ENCODE measurements at regions of chr1 and their contacts with region 1.

Region 1: DNA sequence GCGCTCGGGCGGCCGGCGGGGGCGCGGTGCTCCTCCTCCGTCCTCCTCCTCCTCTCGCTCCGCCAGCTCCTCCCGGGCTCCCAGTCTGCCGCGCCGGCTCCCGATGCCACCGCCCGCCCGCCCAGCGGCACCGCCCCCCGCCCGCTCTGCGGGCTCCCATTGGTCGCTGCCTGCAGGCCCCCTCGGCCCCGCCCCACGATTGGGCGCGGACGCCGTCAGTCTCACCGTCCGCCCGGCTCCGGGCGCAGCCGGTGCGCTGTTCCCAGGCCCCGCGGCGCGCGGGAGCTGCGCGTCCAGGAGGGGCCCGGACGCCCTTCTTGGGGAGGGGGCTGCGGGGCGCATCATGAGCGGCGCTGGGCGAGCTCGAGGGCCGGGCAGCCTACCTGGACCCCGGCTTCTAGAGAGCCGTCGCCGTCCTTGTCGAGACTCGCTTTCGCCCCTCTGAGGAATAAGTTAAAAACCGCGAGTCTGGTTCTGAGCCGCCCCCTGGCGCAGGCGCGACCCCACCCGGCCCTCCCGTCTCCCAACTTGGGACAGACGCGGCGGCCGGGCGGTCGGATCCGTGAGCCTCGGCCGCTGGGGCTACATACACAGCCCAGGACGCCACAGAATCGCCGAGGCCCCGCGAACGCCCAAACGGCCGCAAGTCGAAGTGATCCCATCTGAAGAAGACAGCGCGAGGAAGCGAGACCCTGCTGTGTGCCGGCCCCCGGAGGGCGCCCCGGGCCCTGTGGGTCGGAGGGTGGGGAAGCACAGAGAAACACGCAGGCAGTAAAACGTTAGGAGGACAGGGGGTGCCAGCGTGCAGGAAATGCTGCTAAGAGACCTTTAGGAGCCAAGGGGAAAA is at the start of gene SIPA1L2:
- DNase-seq: peak; percentile 92 to 95 (median 94)
- ATAC-seq: peak; percentile 96
- H3K4me3 ChIP-seq: peak within 1 kb of the TSS; percentile 60 to 68
- H3K27ac ChIP-seq: peak within 1 kb of the TSS; percentile 53 to 85 (median 78)
- H3K4me1 ChIP-seq: peaks cover 18% of the 10 kb centered on the region
- H3K27me3 ChIP-seq: no peaks in the 10 kb centered on the region
- CTCF ChIP-seq: peak in 6 of 7 experiments; percentile 20 to 67 (median 63)
- POLR2A ChIP-seq: peak; percentile 50 to 65 (median 53)
- total RNA-seq, gene SIPA1L2: 5.6 to 8.6 TPM

Region 2: DNA sequence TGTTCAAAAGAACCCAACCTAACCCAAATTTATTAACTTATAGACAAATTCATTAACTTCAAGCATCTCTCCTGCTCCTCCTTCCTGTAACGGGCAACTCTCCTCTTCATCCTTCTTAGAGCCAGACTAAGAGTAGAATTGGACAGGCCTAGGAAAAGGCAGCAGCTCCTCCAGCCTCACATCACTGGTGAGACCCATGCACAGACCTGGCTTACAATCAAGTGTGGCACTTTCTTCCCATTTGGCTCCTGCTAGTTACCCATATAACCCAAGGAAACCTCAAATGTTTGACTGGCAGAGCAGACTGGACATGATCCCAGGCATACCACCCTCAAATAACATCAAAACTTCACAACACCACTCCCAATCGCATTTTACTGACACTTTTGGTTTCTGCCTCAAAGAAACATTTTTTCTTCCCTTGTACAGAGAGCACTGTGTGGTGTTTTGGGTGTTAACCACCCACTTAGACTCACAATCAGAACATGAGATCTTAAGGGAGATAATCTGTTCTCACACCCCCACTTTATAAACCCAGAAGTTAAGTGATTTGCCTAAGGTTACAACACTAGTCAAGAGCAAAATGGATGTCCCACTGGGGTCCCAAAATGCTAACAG is 101.7 kb before region 1 on chr1:
- intact Hi-C with region 1: no loop called
- DNase-seq: no peak
- ATAC-seq: no peak
- H3K4me3 ChIP-seq: no peak overlapping the region
- H3K27ac ChIP-seq: no peak overlapping the region
- H3K4me1 ChIP-seq: no peaks in the 10 kb centered on the region
- H3K27me3 ChIP-seq: no peaks in the 10 kb centered on the region
- CTCF ChIP-seq: no peak
- POLR2A ChIP-seq: no peak

Region 3: DNA sequence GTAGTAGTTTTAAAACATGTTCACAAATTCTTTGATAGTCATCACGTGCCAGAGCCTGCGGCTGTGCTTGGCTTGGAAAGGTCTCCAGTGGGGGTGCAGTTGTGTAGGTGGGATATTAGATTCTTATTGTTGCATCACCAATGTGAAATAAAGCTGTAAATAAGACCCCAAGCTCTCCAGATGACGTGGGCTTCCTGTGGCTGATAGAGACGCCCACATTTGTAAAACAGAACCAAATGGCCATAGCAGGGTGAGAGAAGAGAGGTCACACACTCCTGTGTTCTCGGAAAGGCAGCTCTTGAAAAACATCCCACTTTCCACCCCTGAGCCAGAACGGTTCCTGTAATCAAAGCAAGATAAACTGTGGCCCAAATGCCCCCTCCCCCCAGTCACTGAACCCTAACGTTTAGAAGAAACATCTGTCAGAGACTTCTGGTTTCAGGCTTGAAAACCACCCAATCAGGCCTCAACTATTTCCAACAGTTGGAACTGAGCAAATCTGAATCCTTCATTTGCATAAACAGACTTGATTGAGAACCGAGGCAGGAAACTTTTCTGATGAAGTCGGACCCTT is 313.5 kb after region 1 on chr1:
- intact Hi-C with region 1: loop called (anchors 10 kb)
- DNase-seq: no peak
- ATAC-seq: no peak
- H3K4me3 ChIP-seq: no peak overlapping the region
- H3K27ac ChIP-seq: no peak overlapping the region
- H3K4me1 ChIP-seq: no peaks in the 10 kb centered on the region
- H3K27me3 ChIP-seq: no peaks in the 10 kb centered on the region
- CTCF ChIP-seq: no peak
- POLR2A ChIP-seq: no peak

Region 4: DNA sequence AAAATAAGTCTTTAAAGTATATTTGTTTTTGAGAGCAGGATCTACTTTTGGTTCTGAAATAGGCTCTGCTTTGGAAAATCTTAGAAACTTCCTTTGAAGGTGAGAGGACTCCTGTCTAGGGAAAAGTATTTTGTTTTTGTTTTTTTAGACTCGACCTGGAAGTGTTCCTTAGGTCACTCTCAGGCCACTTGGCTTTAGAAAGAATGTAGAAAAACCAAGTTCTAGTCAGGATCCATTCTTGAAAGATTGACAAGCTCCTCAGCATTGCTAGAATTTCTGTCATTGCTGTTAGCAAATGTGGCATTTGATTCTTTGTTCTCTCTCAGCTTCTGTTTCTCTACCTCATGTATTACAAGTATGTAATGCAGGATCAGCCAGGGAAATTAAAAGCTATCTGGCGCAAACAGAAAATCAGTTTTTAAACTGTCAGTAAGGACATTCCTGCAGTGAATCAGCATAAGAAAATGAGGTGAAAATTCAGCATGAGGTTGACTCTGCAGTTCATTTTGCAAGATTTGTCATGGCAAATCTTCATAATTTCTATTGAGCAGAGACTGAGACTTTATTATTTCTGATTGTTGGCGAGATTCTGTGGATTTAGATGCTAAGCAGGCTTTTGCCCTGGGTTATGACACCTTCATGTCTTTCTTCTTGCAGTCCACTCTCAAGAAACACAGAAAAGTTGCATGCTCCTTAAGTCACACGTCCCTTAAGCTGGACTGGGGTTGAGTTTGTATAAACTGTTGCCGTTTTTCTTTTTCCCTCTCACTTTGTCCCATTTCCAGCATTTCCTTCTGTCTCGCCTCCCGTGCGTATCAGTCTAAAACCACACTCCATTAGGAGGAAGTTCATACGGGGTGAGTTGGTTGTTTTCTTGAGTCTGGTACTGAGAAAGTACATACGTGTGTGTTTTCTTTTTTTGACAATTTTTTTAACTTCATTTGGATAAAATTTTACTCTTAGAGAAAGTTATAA is 332.8 kb after region 1 on chr1:
- intact Hi-C with region 1: no loop called
- DNase-seq: peak in 1 of 4 donors; percentile 28
- ATAC-seq: peak; percentile 35
- H3K4me3 ChIP-seq: no peak overlapping the region
- H3K27ac ChIP-seq: peak overlapping the region in 2 of 4 donors; percentile 4 to 26
- H3K4me1 ChIP-seq: no peaks in the 10 kb centered on the region
- H3K27me3 ChIP-seq: no peaks in the 10 kb centered on the region
- CTCF ChIP-seq: no peak
- POLR2A ChIP-seq: no peak

Region 5: DNA sequence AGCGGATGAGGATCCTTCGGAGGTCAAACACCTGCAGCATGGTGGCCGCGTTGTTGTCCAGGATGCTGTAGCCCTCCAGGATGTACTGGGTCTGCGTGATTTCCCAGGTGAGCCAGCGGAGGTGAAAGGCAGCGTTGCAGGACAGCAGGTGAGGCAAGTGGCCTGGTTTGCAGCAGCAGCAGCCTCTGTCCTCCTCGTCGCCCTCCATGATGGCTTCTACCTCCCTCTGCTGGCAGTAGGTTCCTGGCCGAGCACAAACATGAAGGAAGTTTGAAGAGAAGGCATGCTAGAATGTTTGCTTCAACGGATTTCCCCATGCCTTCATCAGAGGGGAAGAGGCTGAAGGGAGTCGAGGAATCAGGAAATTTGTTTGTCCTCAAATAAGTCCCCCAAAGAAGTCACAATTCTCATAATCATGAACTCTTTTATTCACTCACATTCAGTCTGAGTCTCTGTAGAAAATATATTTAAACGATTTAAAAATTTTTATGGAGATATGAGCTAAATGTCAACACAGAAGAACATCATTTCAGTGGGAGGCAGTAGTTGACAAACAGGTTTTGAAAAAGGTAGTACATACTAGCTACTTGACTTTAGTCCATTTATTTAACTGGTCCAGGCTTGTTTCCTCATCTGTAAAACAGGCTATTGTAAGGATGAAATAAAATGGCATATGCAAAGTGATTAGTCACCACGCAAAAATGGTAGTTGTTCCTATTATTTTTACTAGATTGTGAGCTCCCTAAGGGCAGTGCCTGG is 395.1 kb after region 1 on chr1:
- intact Hi-C with region 1: loop called (anchors 10 kb)
- DNase-seq: peak; percentile 57 to 77 (median 68)
- ATAC-seq: peak; percentile 42
- H3K4me3 ChIP-seq: no peak overlapping the region
- H3K27ac ChIP-seq: no peak overlapping the region
- H3K4me1 ChIP-seq: peaks cover 9% of the 10 kb centered on the region
- H3K27me3 ChIP-seq: no peaks in the 10 kb centered on the region
- CTCF ChIP-seq: peak; percentile 30 to 75 (median 57)
- POLR2A ChIP-seq: no peak

Measured in body of pancreas (tissue), 4 donors.